OCI-LY7 (cell line): ENCODE measurements at regions of chr5 and their contacts with region 1.

Region 1: GRCh38 chr5:62779010-62779422 is 200.4 kb downstream of the LRRC70 start:
- DNase-seq: peak; percentile 57
- H3K4me3 ChIP-seq: no peak overlapping the region
- H3K27ac ChIP-seq: no peak overlapping the region
- H3K4me1 ChIP-seq: no peaks in the 10 kb centered on the region
- CTCF ChIP-seq: peak; percentile 93

Region 2: GRCh38 chr5:62448528-62448927 is 330.5 kb before region 1 on chr5:
- CTCF ChIA-PET with region 1: no interaction called
- POLR2A ChIA-PET with region 1: no interaction called
- intact Hi-C with region 1: loop called (anchors 5 kb)
- DNase-seq: no peak
- H3K4me3 ChIP-seq: no peak overlapping the region
- H3K27ac ChIP-seq: no peak overlapping the region
- H3K4me1 ChIP-seq: no peaks in the 10 kb centered on the region
- CTCF ChIP-seq: no peak

Region 3: DNA sequence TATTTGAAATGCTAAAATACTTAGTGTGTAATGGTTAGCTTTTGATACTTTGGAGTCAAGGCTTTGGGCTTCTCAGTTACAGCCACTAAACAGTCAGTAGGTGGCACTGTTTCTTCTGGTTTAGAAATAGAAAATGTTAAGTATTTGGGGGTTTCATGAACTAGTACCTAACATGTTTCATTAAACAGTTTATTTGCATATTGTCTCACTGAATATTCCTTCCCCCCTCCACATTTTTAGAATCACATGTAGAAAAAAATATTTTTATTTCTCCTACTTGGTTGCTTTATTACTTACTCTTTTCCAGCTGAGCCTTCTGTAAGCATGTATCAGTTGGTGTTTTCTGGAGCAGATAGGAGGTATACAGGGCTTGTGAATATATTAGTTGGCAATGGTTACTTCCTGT is 318.4 kb before region 1 on chr5:
- CTCF ChIA-PET with region 1: no interaction called
- POLR2A ChIA-PET with region 1: no interaction called
- intact Hi-C with region 1: loop called (anchors 1 kb)
- DNase-seq: peak; percentile 64
- H3K4me3 ChIP-seq: no peak overlapping the region
- H3K27ac ChIP-seq: no peak overlapping the region
- H3K4me1 ChIP-seq: peaks cover 3% of the 10 kb centered on the region
- CTCF ChIP-seq: peak; percentile 97

Region 4: GRCh38 chr5:62689599-62690368 is 89.2 kb before region 1 on chr5:
- CTCF ChIA-PET with region 1: no interaction called
- POLR2A ChIA-PET with region 1: no interaction called
- intact Hi-C with region 1: no loop called
- DNase-seq: no peak
- H3K4me3 ChIP-seq: no peak overlapping the region
- H3K27ac ChIP-seq: no peak overlapping the region
- H3K4me1 ChIP-seq: no peaks in the 10 kb centered on the region
- CTCF ChIP-seq: no peak

Region 5: DNA sequence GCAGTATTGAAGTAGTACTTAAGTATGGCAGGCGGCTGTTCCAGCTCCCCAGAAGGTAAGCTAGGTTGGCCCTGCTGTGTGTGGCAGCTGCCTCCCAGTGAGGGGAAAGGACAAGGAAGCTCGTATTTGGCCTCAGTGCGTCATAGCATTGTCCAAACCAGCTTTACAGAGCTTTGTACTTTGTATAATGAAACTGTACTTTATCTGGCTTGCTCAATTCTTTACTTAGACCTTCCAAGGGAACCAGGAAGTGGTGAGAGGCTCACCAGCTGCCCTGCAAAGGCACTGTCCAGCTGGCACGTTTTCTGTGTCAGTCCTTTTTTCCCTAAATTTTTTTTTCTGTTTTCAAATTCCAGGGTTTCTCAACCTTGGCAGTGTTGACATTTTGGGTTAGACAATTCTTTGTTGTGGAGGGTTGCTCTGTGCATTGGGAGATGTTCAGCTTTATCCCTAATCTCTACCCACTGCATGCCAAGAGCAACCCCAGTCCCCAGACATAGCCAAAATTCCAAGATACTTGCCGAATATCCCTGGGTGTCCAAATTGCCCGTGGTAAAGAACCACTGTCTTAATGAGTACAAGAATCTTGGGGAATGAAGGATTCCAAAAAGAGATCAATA is 274.1 kb after region 1 on chr5:
- CTCF ChIA-PET with region 1: no interaction called
- POLR2A ChIA-PET with region 1: no interaction called
- intact Hi-C with region 1: no loop called
- DNase-seq: no peak
- H3K4me3 ChIP-seq: no peak overlapping the region
- H3K27ac ChIP-seq: no peak overlapping the region
- H3K4me1 ChIP-seq: no peaks in the 10 kb centered on the region
- CTCF ChIP-seq: no peak